Colonic mucosa (tissue), 4 donors: ENCODE measurements at regions of chr3 and their contacts with region 1.

Region 1: DNA sequence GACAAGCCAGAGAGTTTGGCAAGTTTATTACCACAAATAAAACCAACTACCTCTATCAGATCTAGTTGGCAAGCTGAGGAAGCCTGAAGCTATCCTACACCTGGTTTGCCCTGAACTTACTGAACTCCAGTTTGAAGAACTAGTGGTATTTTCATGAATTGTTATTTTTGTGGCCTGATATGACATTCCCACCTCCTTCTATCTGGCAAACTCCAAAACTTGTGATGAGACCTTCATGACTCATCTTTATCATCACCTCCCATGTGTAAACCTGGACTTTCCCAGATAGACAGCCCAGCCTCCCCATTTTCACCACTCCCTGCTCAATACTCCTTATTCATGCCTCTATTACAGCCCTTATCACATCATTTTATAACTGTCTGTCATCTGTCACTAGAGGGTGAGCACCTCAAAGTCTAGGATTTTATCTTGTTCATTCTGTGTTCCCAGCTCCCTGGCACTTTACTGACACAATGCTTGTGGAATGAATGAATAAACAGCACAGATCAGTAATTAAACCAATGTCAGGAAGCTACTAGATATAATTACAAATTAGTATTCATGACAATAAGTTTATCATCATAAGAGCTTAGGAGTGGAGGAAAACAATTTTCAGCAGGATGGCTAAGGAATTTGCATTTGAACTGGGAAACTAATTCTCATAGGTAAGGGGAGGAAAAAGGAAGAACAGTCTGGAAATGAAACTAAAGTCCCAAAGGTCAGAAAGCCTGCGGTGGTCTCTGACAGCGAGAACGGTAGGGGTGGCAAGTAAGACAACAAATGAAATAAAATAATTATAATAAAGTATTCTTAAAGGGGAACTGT is 13.2 kb upstream of the TRANK1 start:
- DNase-seq: no peak
- H3K4me3 ChIP-seq: no peak overlapping the region
- H3K27ac ChIP-seq: peak overlapping the region; percentile 53
- H3K4me1 ChIP-seq: no peaks in the 10 kb centered on the region
- H3K27me3 ChIP-seq: no peaks in the 10 kb centered on the region
- CTCF ChIP-seq: no peak

Region 2: DNA sequence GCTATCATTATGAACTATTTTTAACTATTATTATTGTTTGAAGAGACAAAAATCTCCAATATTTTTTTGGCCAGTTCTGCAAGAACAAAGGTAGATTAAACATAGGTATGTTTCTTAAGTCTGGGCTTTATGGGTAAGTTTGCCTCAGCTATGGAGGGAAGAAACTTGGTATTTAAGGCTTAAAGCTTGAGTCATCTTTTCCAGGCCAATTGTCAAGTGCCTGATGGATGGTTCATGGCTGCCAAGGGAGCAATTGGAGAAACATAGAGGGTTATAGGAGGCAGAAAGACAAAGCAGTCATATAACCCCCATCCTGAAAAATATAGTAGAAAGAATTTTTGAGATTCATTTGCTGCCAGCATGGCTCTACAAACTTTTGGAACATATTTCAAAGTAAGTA is 585.0 kb before region 1 on chr3:
- intact Hi-C with region 1: no loop called
- DNase-seq: no peak
- H3K4me3 ChIP-seq: no peak overlapping the region
- H3K27ac ChIP-seq: no peak overlapping the region
- H3K4me1 ChIP-seq: no peaks in the 10 kb centered on the region
- H3K27me3 ChIP-seq: no peaks in the 10 kb centered on the region
- CTCF ChIP-seq: no peak

Region 3: GRCh38 chr3:36904641-36905040 is 53.4 kb before region 1 on chr3:
- intact Hi-C with region 1: loop called (anchors 5 kb)
- DNase-seq: no peak
- H3K4me3 ChIP-seq: no peak overlapping the region
- H3K27ac ChIP-seq: no peak overlapping the region
- H3K4me1 ChIP-seq: peaks cover 9% of the 10 kb centered on the region
- H3K27me3 ChIP-seq: no peaks in the 10 kb centered on the region
- CTCF ChIP-seq: peak; percentile 22